Activated CD4-positive, alpha-beta T cell treated with anti-CD3 and anti-CD28 coated beads, Interleukin-2, amount 10 ng/mL, durations not matched to agents 24 days and 14 days (primary cell): ENCODE measurements at regions of chr6 and their contacts with region 1.

Region 1: DNA sequence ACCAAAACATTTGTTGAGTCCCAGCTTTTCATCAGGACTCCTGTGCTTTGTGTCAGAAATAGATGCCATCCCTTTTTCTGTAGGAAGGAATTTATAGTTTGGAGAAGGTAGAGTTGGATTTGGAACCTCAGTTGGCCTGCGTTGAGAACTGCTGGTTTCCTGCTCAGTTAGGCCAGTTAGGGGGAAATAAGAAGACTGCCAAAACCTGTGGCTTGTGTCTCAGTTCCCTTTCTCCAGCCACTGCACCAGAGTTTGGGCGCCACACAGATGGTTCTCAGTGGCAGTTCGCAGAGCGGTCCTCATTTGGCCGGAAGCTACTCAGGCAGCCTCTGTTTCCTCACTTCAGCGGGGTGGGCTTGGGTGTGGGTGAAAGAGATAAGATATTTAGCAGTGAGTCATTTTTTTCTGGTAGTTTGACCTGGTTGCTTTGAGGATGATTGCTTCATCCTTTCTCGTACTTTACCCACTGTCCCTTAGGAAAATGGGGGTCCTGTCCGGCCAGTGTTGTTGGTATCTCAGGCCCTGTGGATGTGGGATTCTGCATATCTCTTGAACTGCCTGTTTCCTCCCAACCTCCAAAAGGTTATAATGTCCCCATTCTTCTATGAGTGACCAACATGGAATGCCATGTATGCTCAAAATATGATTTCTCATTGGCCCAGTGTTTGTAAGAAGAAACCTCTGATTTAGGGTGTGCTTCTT is 53.7 kb downstream of the JARID2 start:
- DNase-seq: peak; percentile 74
- H3K4me3 Mint-ChIP-seq: peak overlapping the region; percentile 20
- H3K27ac Mint-ChIP-seq: peak overlapping the region; percentile 65
- H3K4me1 Mint-ChIP-seq: peaks cover 68% of the 10 kb centered on the region
- H3K27me3 Mint-ChIP-seq: no peaks in the 10 kb centered on the region

Region 2: DNA sequence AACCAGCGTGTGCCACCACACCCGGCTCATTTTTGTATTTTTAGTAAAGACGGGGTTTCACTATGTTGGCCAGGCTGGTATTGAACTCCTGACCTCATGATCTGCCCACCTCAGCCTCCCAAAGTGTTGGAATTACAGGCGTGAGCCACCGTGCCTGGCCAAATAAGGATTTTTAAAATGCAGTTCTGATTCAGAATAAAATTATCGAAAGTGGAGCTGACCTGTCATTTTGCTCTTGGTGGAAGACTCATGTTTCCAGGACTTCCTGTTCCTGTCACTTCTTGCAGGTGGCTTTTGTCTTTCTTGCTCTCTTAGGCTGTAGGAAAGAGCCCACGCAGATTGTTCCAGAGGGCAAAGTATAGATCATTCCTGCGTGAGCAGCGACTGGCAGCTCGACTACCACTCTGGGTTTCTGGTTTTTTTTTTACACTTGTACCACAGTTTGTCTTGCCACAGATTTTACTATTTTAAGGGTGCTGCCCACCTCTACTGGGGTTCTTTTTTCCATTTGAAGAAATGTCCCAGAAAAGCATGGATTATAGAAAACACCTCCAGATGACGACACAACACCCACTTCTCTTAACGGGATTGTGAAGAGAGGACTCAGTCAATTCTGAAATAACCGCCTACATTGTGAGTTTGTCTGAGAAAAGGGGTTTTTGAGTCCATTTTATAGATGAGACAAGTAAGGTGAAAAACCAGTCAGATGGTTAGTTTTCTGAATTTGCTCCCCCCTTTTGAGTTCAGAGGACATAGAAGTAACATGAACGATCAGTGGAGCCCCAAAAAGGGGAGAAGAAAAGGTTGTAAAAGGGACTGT is 46.2 kb before region 1 on chr6:
- intact Hi-C with region 1: loop called (anchors 1 kb)
- DNase-seq: no peak
- H3K4me3 Mint-ChIP-seq: peak overlapping the region; percentile 87
- H3K27ac Mint-ChIP-seq: peak overlapping the region; percentile 82
- H3K4me1 Mint-ChIP-seq: peaks cover 91% of the 10 kb centered on the region
- H3K27me3 Mint-ChIP-seq: no peaks in the 10 kb centered on the region

Region 3: DNA sequence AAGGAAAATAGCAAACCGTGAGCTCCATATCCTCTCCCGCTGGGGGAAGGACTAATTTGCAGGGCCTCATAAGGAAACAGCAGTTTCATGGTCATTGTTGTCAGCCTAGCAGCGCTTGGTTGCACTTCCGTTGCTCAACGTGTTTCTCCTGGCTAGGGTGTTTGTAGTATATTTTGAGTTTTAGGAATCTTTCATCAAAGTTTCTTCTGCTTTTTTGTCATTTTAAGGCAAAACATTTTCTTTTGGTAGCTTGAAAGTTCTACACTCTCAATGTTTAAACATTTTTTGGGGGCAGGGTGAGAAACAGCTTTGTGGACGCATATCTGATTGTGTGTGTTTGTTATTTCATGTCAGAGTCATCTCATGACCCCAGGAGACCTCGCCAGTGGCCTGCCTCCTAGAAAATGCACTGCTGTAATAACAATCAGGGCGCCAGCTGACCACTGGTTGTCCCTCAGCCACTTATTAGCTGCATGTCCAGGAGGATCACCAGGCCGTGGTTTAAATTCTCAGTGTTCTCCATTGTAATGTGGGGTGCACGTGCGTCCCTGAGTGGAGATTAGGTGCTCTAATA is 33.1 kb before region 1 on chr6:
- intact Hi-C with region 1: loop called (anchors 2 kb)
- DNase-seq: no peak
- H3K4me3 Mint-ChIP-seq: peak overlapping the region; percentile 34
- H3K27ac Mint-ChIP-seq: peak overlapping the region; percentile 13
- H3K4me1 Mint-ChIP-seq: peaks cover 74% of the 10 kb centered on the region
- H3K27me3 Mint-ChIP-seq: no peaks in the 10 kb centered on the region

Region 4: GRCh38 chr6:15317934-15318902 is 18.6 kb after region 1 on chr6:
- intact Hi-C with region 1: loop called (anchors 2 kb)
- DNase-seq: no peak
- H3K4me3 Mint-ChIP-seq: peak overlapping the region; percentile 46
- H3K27ac Mint-ChIP-seq: peak overlapping the region; percentile 71
- H3K4me1 Mint-ChIP-seq: peaks cover 84% of the 10 kb centered on the region
- H3K27me3 Mint-ChIP-seq: no peaks in the 10 kb centered on the region

Region 5: GRCh38 chr6:15384901-15385300 is 85.3 kb after region 1 on chr6:
- intact Hi-C with region 1: no loop called
- DNase-seq: no peak
- H3K4me3 Mint-ChIP-seq: no peak overlapping the region
- H3K27ac Mint-ChIP-seq: peak overlapping the region; percentile 34
- H3K4me1 Mint-ChIP-seq: peaks cover 66% of the 10 kb centered on the region
- H3K27me3 Mint-ChIP-seq: no peaks in the 10 kb centered on the region

Region 6: GRCh38 chr6:15441215-15441868 is 141.8 kb after region 1 on chr6:
- intact Hi-C with region 1: loop called (anchors 2 kb)
- DNase-seq: peak; percentile 84
- H3K4me3 Mint-ChIP-seq: no peak overlapping the region
- H3K27ac Mint-ChIP-seq: no peak overlapping the region
- H3K4me1 Mint-ChIP-seq: peaks cover 70% of the 10 kb centered on the region
- H3K27me3 Mint-ChIP-seq: no peaks in the 10 kb centered on the region